Ovary (tissue), 10 donors: ENCODE measurements at regions of chr12 and their contacts with region 1.

Region 1: GRCh38 chr12:49776413-49776812 is 35.1 kb downstream of the TMBIM6 start:
- DNase-seq: peak; percentile 43 to 68 (median 56)
- H3K4me3 ChIP-seq: no peak overlapping the region
- H3K27ac ChIP-seq: no peak overlapping the region
- H3K4me1 ChIP-seq: no peaks in the 10 kb centered on the region
- H3K27me3 ChIP-seq: no peaks in the 10 kb centered on the region
- CTCF ChIP-seq: peak; percentile 22 to 56 (median 47)
- EP300 ChIP-seq: no peak
- POLR2A ChIP-seq: no peak

Region 2: DNA sequence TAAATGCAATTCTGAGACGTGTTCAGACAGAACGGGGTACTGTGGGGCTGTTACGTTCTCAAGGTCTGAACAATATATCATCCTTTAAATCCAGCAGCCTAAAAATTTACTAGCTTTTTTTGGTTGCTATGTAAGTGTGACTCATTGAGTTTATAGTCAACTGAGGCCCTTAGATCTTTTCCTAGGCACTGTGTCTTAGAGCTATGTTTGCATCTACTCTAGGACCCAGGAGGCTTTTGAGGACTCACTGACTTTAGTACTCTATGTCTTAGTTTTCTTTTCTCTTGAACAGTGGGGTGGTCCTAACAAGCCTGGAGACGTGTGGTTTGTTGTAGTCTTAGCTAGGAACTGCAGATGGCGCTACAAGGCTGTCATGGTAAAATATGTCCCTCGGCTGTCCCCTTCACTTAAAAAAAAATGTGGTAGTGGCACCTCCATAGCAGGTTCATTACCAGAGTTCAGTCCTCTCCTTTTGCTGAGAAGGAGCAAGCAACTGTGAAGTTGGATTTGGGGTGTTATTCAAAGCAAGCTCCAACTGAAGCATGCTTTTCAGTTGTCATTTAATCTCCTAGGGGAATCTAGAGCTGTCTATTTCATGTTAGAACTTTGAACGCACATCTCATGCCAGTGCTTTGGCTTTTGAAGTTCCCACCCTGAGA is 417.8 kb before region 1 on chr12:
- intact Hi-C with region 1: no loop called
- DNase-seq: peak in 1 of 5 donors; percentile 41
- H3K4me3 ChIP-seq: no peak overlapping the region
- H3K27ac ChIP-seq: no peak overlapping the region
- H3K4me1 ChIP-seq: no peaks in the 10 kb centered on the region
- H3K27me3 ChIP-seq: no peaks in the 10 kb centered on the region
- CTCF ChIP-seq: peak in 2 of 3 donors; percentile 59 to 60
- EP300 ChIP-seq: no peak
- POLR2A ChIP-seq: no peak

Region 3: DNA sequence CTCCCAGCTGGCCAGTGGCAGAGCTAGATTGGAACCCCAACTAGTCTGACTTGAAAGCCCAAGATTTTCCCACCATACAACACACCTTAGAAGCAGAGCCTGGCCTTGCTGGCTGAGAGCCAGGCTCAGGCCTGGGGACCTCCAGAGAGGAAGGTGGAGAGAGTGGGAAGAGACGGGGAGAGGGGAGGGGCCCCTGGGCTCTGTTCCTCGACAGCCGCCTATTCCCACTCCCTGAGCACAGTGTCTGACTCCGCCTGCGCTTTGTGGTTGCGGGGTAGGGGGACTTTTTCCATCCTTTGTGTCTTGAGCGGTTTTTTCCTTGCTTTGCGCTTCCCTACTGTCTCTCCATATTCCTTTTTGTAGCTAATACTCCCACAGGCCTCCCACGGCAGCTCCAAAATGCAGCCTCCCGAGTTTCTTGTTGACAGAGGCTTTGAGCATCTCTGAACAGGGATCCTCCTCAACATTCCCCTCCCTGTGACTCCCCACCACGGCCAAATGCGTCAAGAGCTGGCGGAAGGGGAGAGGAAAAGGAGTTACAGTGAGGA is 241.6 kb before region 1 on chr12:
- intact Hi-C with region 1: no loop called
- DNase-seq: no peak
- H3K4me3 ChIP-seq: no peak overlapping the region
- H3K27ac ChIP-seq: no peak overlapping the region
- H3K4me1 ChIP-seq: no peaks in the 10 kb centered on the region
- H3K27me3 ChIP-seq: no peaks in the 10 kb centered on the region
- CTCF ChIP-seq: no peak
- EP300 ChIP-seq: no peak
- POLR2A ChIP-seq: no peak

Region 4: DNA sequence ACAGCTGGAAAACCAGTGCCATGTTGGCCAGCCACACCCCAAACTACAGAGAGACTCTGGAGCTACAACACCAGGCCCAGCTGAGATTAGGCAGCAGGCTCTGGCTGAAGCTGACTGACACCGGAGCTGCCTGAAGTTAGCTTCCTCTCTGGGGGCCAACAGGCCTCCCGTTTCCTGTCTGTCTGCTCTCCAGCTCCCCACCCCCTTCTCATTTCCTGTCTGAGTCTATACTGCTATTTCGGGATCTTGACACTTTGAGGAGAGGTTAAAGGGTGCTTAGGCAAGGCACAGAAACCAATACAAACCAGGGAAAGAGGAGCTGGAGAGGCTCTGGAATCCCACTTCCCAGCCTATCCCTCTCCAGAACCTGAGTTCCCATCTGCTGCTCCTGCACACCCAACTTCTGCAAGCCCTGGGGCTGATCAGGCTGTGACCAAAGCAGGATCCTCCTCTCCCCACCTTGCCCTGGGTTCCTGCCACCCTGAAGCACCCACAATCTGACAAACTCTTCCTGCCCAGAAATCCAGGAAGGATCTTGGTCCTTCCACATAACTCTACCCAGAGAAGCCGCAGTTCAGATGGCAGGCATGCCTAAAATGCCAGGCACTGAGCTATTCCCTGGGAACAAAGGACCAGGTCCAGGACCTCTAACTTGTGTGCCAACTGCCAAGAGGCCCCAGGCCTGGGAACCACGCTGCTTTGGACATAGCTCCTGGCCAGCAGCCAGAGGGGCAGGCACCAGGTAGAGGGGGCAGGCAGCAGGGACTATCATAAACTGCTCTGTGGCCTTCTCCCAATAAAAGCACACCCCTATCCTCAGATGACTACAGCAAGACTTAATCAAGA is 113.2 kb before region 1 on chr12:
- intact Hi-C with region 1: no loop called
- DNase-seq: peak; percentile 56 to 66 (median 63)
- H3K4me3 ChIP-seq: no peak overlapping the region
- H3K27ac ChIP-seq: peak overlapping the region in 1 of 2 donors; percentile 77
- H3K4me1 ChIP-seq: peaks cover 19% of the 10 kb centered on the region
- H3K27me3 ChIP-seq: no peaks in the 10 kb centered on the region
- CTCF ChIP-seq: no peak
- EP300 ChIP-seq: no peak
- POLR2A ChIP-seq: no peak

Region 5: DNA sequence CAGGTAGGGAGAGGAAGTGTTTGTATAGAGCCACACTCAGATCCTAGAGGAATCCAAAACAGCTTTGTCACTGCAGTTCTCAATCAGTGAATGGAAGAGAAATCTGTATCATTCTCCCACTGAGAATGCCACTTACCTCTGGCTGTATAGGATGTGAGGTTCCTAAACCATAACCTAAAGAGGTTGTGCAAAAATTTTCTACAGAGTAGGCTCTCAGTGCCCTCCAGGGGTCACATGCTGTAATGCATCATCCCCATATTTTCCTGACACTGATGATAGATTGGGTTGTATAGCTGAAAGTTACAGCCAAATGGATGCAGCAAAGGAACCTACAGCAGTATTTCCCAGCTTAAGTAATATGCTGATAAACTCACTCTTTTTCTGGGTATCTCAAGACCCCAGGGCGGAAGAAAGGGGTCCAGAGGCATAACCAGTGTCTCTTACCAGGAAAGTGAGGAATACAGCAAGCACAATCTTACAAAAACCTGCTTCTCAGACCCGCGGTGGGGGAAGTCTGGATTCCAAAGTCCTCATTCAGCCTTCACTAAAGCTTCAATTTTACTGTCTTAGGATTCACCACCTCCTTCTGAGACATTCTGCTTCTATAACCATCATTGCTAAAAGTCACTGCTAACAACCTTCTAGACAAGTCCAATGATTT is 62.7 kb after region 1 on chr12:
- intact Hi-C with region 1: loop called in 2 of 4 experiments (anchors 2 to 10 kb)
- DNase-seq: no peak
- H3K4me3 ChIP-seq: no peak overlapping the region
- H3K27ac ChIP-seq: no peak overlapping the region
- H3K4me1 ChIP-seq: peaks cover 6% of the 10 kb centered on the region
- H3K27me3 ChIP-seq: no peaks in the 10 kb centered on the region
- CTCF ChIP-seq: peak in 2 of 3 donors; percentile 11
- EP300 ChIP-seq: no peak
- POLR2A ChIP-seq: no peak

Region 6: DNA sequence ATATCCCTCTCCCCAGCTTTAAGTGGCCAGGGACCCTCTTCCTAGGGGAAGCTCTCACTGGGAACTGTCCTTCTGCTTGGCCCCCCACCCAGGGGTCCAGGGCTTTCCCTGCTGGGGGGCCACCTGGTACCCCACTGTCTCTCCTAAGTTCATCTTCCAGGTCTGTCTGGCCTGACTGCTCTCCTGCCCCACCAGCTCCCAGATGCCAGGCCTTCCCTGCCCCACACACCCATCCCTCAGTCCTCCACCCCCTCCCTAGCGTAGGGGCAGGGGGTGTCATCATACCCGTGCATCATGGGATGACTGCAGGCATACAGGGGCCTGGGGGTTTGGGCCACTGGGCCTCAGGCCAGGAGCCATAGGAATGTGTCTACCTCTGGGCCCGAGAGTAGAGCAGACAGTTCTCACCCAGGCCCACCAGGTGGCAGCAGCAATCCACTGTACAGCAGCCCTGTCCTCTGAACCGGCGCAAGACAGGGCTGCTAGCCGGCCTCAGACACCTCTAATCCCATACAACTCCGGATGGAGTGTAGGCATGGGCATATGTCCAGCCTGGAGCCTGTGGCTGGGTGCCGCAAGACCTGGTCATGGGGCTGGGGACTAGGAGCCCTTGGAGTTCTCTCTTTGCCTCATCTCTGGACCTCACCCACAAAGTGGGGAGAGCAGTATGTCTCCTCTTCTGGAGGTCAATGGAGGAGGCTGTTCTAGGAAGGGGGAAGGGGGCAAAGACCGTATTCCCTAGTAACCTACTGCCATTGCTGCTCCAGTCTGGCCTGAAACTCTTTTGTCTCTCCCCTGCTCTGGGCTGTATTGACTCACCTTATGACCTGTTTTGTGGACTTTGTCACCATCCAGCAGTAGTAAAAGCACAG is 298.8 kb after region 1 on chr12:
- intact Hi-C with region 1: loop called in 2 of 4 experiments (anchors 10 kb)
- DNase-seq: peak; percentile 78 to 90 (median 88)
- H3K4me3 ChIP-seq: no peak overlapping the region
- H3K27ac ChIP-seq: no peak overlapping the region
- H3K4me1 ChIP-seq: no peaks in the 10 kb centered on the region
- H3K27me3 ChIP-seq: no peaks in the 10 kb centered on the region
- CTCF ChIP-seq: peak; percentile 87 to 96 (median 92)
- EP300 ChIP-seq: no peak
- POLR2A ChIP-seq: no peak